Lower leg skin (tissue), 4 donors: ENCODE measurements at regions of chr2 and their contacts with region 1.

Region 1: GRCh38 chr2:45643543-45644542 is 7.6 kb upstream of the PRKCE start:
- DNase-seq: peak; percentile 43 to 91
- H3K4me3 ChIP-seq: peak overlapping the region; percentile 5
- CTCF ChIP-seq: peak in 2 of 3 donors; percentile 11 to 91
- POLR2A ChIP-seq: no peak

Region 2: GRCh38 chr2:45778720-45779171 is 134.9 kb after region 1 on chr2:
- intact Hi-C with region 1: loop called (anchors 10 kb)
- DNase-seq: peak; percentile 65 to 87
- H3K4me3 ChIP-seq: no peak overlapping the region
- CTCF ChIP-seq: peak in 1 of 3 donors; percentile 55
- POLR2A ChIP-seq: no peak

Region 3: DNA sequence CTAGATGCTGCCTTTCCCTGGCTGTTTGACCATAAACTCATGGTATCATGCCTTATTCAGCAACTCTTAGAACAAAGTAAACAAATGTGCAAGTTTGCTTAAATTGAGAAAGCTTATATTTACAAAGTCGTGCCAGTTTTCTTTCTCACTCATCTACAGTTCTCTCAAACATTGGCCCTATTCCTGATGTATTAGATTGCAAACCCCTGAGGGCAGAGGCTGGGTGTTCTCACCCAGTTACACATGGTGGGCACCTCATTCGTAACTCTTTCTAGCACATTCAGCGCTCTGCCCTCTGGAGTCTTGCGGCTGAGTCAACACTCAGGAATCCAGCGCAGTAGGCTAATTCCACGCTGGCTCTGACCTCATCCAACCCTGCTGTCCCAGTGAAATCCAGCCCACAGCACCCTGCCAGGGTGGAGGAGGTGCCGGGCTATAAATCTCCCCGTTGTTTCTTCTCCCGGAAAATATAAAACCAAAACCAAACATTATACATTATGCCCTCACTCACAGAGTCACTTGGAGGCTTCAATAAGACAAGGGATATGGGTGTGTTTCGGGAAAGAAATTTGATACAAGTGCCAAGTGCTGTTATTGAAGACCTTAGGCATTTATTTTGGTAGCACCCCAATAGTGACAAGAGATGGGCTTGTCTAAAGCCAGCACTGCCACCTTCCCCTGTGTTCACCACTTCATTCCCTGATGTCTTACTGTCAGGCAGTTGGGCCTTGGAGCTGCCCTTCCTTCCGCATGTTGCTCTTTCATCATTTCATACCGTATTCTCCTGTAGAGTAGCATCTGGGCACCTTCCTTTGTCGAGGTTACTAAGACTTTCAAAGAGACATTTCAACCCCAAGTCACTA is 295.0 kb after region 1 on chr2:
- intact Hi-C with region 1: loop called (anchors 2 kb)
- DNase-seq: peak; percentile 74 to 91
- H3K4me3 ChIP-seq: no peak overlapping the region
- CTCF ChIP-seq: no peak
- POLR2A ChIP-seq: no peak